Activated T-helper 2 cell treated with anti-CD3 and anti-CD28 coated beads, Interferon-gamma antibody, Interleukin-2, Interleukin-4, amounts not matched to agents 10 μg/mL and 5 μg/mL and 100 μg/mL, durations not matched to agents 14 hours and 24 hours and 36 hours (primary cell): ENCODE measurements at regions of chr20 and their contacts with region 1.

Region 1: GRCh38 chr20:833450-834150 is at the start of gene FAM110A:
- DNase-seq: peak; percentile 95
- H3K4me3 Mint-ChIP-seq: peak within 1 kb of the TSS; percentile 82
- H3K27ac Mint-ChIP-seq: peak within 1 kb of the TSS; percentile 75
- H3K4me1 Mint-ChIP-seq: peaks cover 54% of the 10 kb centered on the region
- H3K27me3 Mint-ChIP-seq: no peaks in the 10 kb centered on the region
- total RNA-seq, gene FAM110A: 12.7 and 12.8 TPM in 2 replicates

Region 2: DNA sequence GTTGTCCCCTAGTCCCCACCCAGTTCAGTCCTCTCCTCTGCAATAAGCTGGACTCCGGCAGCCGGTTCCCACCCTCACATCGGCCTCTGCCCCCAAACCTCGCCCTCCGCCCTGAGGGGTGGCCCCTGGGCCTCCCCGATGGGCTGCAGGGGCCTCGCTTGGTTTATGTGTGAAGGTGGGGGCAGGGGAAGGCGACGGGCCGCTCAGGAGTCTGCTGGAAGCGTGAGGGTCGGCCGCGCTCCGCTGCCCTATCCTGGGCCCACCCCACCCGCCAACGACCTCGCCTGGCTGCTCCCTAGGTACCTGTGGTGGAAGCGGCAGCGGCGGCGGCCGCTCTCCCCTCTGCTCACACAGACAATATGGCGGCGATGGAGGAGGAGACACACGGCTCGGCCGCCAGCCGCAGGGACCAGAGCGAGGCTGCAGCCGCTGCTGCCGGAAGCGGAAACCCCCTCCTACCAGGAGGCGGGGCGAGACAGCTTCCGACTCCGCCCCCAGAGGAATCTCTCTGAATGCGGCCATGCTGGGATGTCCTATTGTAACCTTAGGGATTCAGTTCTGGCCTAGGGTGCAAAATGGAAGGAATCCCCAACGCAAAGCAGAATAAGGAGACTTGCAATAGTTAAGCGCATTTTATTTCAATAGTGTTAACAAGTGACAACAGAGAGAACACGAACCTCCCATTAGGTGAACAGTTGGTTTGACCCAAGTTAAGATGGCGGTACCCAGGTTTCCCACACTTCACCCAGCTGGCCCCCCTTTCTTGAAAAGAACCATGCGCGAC is 290.0 kb before region 1 on chr20 and contains the start of gene CSNK2A1:
- intact Hi-C with region 1: loop called (anchors 5 kb)
- DNase-seq: peak; percentile 94
- H3K4me3 Mint-ChIP-seq: peak within 1 kb of the TSS; percentile 92
- H3K27ac Mint-ChIP-seq: peak within 1 kb of the TSS; percentile 94
- H3K4me1 Mint-ChIP-seq: peaks cover 34% of the 10 kb centered on the region
- H3K27me3 Mint-ChIP-seq: peaks cover 11% of the 10 kb centered on the region
- total RNA-seq, gene CSNK2A1: 160 and 169 TPM in 2 replicates

Region 3: GRCh38 chr20:653110-653589 is 180.4 kb before region 1 on chr20 and contains the start of gene SRXN1:
- intact Hi-C with region 1: loop called (anchors 1 kb)
- DNase-seq: peak; percentile 73
- H3K4me3 Mint-ChIP-seq: peak within 1 kb of the TSS; percentile 85
- H3K27ac Mint-ChIP-seq: peak within 1 kb of the TSS; percentile 72
- H3K4me1 Mint-ChIP-seq: peaks cover 27% of the 10 kb centered on the region
- H3K27me3 Mint-ChIP-seq: peaks cover 28% of the 10 kb centered on the region
- total RNA-seq, gene SRXN1: 20.0 and 20.4 TPM in 2 replicates

Region 4: DNA sequence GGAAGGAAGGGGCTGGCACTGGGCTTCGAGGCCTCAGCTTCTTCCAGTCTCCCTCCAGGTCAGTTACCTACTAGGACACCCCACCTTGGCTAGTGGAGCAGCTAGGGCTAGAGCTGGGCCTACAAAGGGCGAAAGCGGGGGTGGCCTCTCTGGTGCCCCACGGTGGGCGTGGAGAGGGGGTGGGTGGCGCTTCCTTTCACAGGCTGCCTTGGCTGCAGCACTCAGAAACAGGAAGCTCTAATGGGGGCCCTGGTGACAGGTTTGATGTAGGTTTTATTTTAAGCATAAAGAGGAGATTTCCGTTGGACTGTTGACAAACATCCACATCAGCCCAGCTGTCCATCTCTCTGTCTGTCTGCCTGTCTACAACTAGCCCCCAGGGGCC is 13.3 kb after region 1 on chr20:
- intact Hi-C with region 1: loop called (anchors 2 kb)
- DNase-seq: peak; percentile 46
- H3K4me3 Mint-ChIP-seq: peak overlapping the region; percentile 79
- H3K27ac Mint-ChIP-seq: peak overlapping the region; percentile 82
- H3K4me1 Mint-ChIP-seq: peaks cover 35% of the 10 kb centered on the region
- H3K27me3 Mint-ChIP-seq: no peaks in the 10 kb centered on the region

Region 5: GRCh38 chr20:859751-860231 is 26.2 kb after region 1 on chr20:
- intact Hi-C with region 1: loop called (anchors 2 kb)
- DNase-seq: no peak
- H3K4me3 Mint-ChIP-seq: no peak overlapping the region
- H3K27ac Mint-ChIP-seq: peak overlapping the region; percentile 11
- H3K4me1 Mint-ChIP-seq: peaks cover 39% of the 10 kb centered on the region
- H3K27me3 Mint-ChIP-seq: no peaks in the 10 kb centered on the region

Region 6: DNA sequence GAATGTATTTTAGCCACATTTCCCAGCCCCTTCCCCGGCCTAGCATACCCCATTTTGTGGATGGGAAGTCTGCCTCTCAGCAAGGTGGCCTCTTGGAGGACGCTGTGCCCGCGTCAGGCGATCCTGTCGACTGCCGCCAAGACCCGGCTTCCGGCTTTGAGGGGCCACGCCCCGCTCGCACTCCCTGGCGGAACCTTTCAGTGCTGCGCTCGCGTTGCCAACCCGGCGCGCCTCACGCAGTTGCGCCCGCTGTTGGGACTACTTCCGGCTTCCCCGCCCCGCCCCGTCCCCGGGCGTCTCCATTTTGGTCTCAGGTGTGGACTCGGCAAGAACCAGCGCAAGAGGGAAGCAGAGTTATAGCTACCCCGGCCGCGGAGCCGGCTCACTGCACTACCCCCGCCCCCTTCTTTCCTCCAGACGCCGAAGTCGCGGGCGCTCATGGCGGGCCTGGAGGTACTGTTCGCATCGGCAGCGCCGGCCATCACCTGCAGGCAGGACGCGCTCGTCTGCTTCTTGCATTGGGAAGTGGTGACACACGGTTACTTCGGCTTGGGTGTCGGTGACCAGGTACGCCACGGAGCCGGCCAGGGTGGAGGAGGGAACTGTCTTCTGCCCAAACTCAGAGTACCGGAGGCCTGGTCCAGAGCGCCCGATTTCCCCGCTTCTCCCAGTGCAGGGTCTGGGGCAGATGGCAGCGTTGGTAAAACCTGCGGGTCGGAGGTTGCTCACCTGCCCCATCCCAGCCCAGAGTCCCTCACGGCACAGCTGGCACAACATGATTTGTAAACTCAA is 284.9 kb after region 1 on chr20 and contains the start of gene PSMF1:
- intact Hi-C with region 1: loop called (anchors 5 kb)
- DNase-seq: peak; percentile 96
- H3K4me3 Mint-ChIP-seq: peak within 1 kb of the TSS; percentile 91
- H3K27ac Mint-ChIP-seq: peak within 1 kb of the TSS; percentile 79
- H3K4me1 Mint-ChIP-seq: peaks cover 42% of the 10 kb centered on the region
- H3K27me3 Mint-ChIP-seq: no peaks in the 10 kb centered on the region
- total RNA-seq, gene PSMF1: 175 and 182 TPM in 2 replicates

Region 7: DNA sequence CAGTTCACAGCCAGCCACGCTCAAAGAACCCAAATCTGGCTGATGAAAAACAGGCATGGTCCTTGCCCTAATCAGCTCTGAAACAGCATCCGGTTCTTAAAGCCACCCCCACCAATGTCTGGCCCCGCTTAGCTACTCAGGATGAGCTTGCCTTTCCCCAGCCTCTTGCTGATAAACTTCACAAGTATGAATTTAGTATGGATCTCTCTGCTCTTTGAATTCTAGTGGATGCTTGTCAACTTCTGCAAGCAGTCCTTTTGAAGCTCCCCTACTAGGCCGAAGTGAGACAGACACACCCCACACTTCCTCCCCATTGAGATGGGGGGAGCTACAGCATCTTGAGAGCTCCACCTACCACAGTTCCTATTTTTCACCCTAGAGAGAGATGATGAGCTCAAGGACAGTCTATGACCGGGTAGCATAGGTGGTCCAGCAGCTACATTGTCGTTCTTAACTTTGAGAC is 1895.7 kb after region 1 on chr20:
- intact Hi-C with region 1: no loop called
- DNase-seq: no peak
- H3K4me3 Mint-ChIP-seq: no peak overlapping the region
- H3K27ac Mint-ChIP-seq: no peak overlapping the region
- H3K4me1 Mint-ChIP-seq: peaks cover 7% of the 10 kb centered on the region
- H3K27me3 Mint-ChIP-seq: peaks cover 21% of the 10 kb centered on the region